SK-N-SH (cell line): ENCODE measurements at regions of chr12 and their contacts with region 1.

Region 1: DNA sequence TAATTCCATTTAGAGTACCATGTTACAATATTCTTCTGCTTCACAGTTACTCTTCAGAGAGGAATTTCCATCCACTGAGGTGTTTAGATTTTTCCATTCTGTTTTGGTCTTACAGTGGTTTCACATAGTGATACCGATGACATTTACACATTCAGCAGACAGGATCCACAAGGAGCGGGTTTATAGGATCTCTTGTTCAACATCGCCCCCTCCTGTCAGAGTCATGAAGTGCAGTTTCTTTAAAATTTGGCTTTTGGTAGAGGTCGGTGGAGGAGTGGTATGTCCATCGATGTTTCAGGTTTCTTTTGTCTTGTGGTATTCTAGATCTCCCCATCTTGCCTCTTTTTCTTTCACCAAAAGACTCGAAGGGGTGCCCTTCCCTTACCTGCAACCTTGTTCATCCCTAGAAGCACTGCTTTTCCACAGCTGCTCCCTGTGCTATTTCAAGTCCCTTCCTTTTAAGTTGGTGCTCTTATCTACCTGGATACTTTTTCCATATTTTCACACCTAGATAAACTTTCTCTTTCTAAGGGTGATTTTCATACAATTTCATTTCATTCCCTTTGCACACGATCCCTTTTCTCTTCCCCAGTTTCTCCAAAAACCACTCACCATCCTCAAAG is 181.3 kb downstream of the ITPR2 start:
- DNase-seq: peak; percentile 75
- H3K4me3 ChIP-seq: no peak overlapping the region; a peak in 1 of 4 replicates
- H3K27ac ChIP-seq: 0 out of 4 replicates have a peak overlapping the region, but pooled peaks of 1 of the 2 experiments have one; percentile 4
- H3K4me1 ChIP-seq: peaks cover 0 to 17% of the 10 kb centered on the region in 2 experiments; a peak in 2 of 4 replicates
- H3K27me3 ChIP-seq: no peaks in the 10 kb centered on the region
- CTCF ChIP-seq: peak; percentile 86
- EP300 ChIP-seq: no peak
- RAD21 ChIP-seq: peak; percentile 95

Region 2: GRCh38 chr12:26097046-26097878 is 554.4 kb before region 1 on chr12:
- CTCF ChIA-PET with region 1: interaction called, 10 read pairs
- POLR2A ChIA-PET with region 1: interaction called, 4 read pairs
- DNase-seq: peak; percentile 75
- H3K4me3 ChIP-seq: peak overlapping the region in 1 of 2 experiments; percentile 20; a peak in 1 of 4 replicates
- H3K27ac ChIP-seq: no peak overlapping the region
- H3K4me1 ChIP-seq: no peaks in the 10 kb centered on the region; a peak in 1 of 4 replicates
- H3K27me3 ChIP-seq: no peaks in the 10 kb centered on the region
- CTCF ChIP-seq: peak; percentile 98
- EP300 ChIP-seq: no peak
- RAD21 ChIP-seq: peak; percentile 88

Region 3: GRCh38 chr12:26126340-26127284 is 525.1 kb before region 1 on chr12:
- CTCF ChIA-PET with region 1: interaction called, 64 read pairs
- POLR2A ChIA-PET with region 1: interaction called, 3 read pairs
- DNase-seq: peak; percentile 90
- H3K4me3 ChIP-seq: peak overlapping the region; percentile 65 to 83
- H3K27ac ChIP-seq: peak overlapping the region; percentile 69 to 96
- H3K4me1 ChIP-seq: peaks cover 5 to 21% of the 10 kb centered on the region in 2 experiments; a peak in 3 of 4 replicates
- H3K27me3 ChIP-seq: no peaks in the 10 kb centered on the region
- CTCF ChIP-seq: peak; percentile 22; the same call in 1 of the 2 replicates
- EP300 ChIP-seq: no peak
- RAD21 ChIP-seq: peak; percentile 33; the same call in 1 of the 2 replicates